ENCODE measurements at regions of chr22 and their contacts with region 1.

Region 1: DNA sequence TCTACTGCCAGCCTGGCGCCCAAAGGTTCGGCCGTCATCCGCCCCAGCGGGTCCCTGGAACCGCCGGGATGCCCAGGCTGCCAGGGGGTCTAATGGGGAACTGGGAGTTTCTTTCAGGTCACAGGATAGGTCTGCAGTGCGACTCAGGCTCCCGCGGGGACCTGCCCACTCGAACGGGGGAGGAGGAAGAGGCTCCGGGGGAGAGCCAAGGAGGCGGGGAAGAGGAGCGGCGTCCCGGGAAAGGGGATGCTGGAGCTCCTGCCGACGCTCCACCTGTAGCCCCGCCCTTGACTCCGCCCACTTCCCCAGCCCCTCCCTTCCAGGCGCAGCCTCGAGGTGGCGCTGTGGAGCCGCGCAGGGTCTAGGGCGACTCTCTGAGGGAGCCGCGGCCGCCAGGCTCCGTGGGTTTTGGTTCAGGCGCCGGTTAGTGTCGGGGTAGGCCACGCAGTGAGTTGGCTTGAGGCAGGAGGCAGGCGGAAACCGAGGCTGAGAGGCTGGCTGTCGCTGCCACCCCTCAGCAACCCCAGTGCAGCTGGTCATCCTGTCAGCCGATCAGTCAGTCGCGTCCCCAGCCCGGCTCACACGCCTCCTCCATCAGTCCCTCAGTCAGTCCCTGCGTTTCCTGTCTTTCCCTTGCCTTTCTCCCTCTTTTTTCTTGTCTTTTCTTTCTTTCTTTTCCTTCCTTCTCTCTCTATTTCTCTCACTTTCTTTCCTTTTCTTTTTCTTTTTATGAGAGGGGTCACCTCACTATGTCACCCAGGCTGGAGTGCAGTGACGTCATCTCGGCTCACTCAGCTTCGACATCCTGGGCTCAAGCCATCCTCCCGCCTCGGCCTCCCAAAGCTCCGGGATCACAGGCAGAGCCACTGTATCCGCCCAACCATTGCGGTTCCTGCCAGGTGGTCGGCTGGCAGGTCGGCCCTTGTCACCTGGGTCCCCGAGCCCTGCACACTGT is 26.4 kb downstream of the YWHAH start:
- DNase-seq: peak; percentile 61 to 100
- H3K4me3 ChIP-seq: peak overlapping the region; percentile 36 to 88 (median 68)
- H3K27ac ChIP-seq: no peak overlapping the region
- H3K4me1 ChIP-seq: peaks cover 0 to 2% (median 0%) of the 10 kb centered on the region in 4 experiments; a peak in 1 of 7 replicates
- H3K27me3 ChIP-seq: peaks cover 0 to 7% (median 2%) of the 10 kb centered on the region in 4 experiments; a peak in 3 of 7 replicates
- CTCF ChIP-seq: peak; percentile 93 to 95 (median 94)
- EP300 ChIP-seq: 0 out of 3 replicates have a peak, but pooled peaks of 1 of the 2 experiments have one; percentile 31
- POLR2A ChIP-seq: no peak
- RAD21 ChIP-seq: peak; percentile 73 to 84

Region 2: GRCh38 chr22:31749636-31750364 is 221.0 kb before region 1 on chr22 and contains the start of gene PRR14L:
- CTCF ChIA-PET with region 1: interaction called, 13 read pairs
- POLR2A ChIA-PET with region 1: interaction called, 4 read pairs
- DNase-seq: peak; percentile 87 to 100
- H3K4me3 ChIP-seq: peak within 1 kb of the TSS; percentile 85 to 98 (median 92)
- H3K27ac ChIP-seq: peak within 1 kb of the TSS; percentile 81
- H3K4me1 ChIP-seq: peaks cover 5 to 16% (median 12%) of the 10 kb centered on the region in 4 experiments
- H3K27me3 ChIP-seq: no peaks in the 10 kb centered on the region
- CTCF ChIP-seq: no peak
- EP300 ChIP-seq: peak in 1 of 2 experiments; percentile 99; a peak in 2 of 3 replicates
- POLR2A ChIP-seq: peak; percentile 85 to 92
- RAD21 ChIP-seq: no peak
- total RNA-seq, gene PRR14L: 98.6 and 110 TPM in 2 replicates

Region 3: DNA sequence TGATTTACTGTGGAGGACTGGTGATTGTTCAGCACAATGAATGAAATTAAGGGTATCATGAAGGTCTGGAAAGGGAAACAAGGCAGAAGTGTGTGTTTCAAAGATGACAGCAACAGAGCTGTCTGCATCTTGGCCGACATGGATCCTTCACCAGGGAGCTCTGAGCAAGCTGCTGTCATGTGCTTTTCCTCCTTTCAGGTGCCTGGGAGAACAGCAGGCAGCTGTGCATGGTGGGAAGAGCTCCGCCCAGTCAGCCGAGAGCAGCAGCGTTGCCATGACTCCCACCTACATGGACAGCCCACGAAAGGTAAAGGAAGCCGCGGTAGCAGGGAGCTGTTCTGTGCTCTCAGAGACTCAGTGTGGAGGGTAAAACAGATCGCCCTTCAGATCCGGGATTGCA is 113.5 kb before region 1 on chr22:
- CTCF ChIA-PET with region 1: interaction called, 11 read pairs
- POLR2A ChIA-PET with region 1: no interaction called
- DNase-seq: peak; percentile 57 to 76
- H3K4me3 ChIP-seq: no peak overlapping the region
- H3K27ac ChIP-seq: no peak overlapping the region
- H3K4me1 ChIP-seq: peaks cover 0 to 2% (median under 1%) of the 10 kb centered on the region in 4 experiments; a peak in 2 of 7 replicates
- H3K27me3 ChIP-seq: no peaks in the 10 kb centered on the region; a peak in 1 of 7 replicates
- CTCF ChIP-seq: no peak
- EP300 ChIP-seq: no peak
- POLR2A ChIP-seq: peak; percentile 24 to 30; a peak in 2 of 3 replicates
- RAD21 ChIP-seq: no peak

Region 4: GRCh38 chr22:31897842-31898805 is 72.6 kb before region 1 on chr22:
- CTCF ChIA-PET with region 1: interaction called, 30 read pairs
- POLR2A ChIA-PET with region 1: no interaction called
- DNase-seq: no peak
- H3K4me3 ChIP-seq: no peak overlapping the region
- H3K27ac ChIP-seq: no peak overlapping the region
- H3K4me1 ChIP-seq: peaks cover 0 to 3% (median 1%) of the 10 kb centered on the region in 4 experiments; a peak in 2 of 7 replicates
- H3K27me3 ChIP-seq: no peaks in the 10 kb centered on the region
- CTCF ChIP-seq: no peak
- EP300 ChIP-seq: no peak
- POLR2A ChIP-seq: no peak
- RAD21 ChIP-seq: no peak

Region 5: GRCh38 chr22:31943976-31944699 is 26.6 kb before region 1 on chr22 and contains the start of gene YWHAH:
- CTCF ChIA-PET with region 1: interaction called, 12 read pairs
- POLR2A ChIA-PET with region 1: interaction called, 4 read pairs
- DNase-seq: peak; percentile 84 to 95
- H3K4me3 ChIP-seq: peak within 1 kb of the TSS; percentile 80 to 92 (median 85)
- H3K27ac ChIP-seq: peak within 1 kb of the TSS; percentile 91
- H3K4me1 ChIP-seq: peaks cover 2 to 14% (median 11%) of the 10 kb centered on the region in 4 experiments; a peak in 6 of 7 replicates
- H3K27me3 ChIP-seq: no peaks in the 10 kb centered on the region
- CTCF ChIP-seq: no peak
- EP300 ChIP-seq: no peak
- POLR2A ChIP-seq: peak; percentile 59 to 97
- RAD21 ChIP-seq: peak in 1 of 2 experiments; percentile 7; a peak in 1 of 4 replicates
- total RNA-seq, gene YWHAH: 247 and 248 TPM in 2 replicates

Region 6: DNA sequence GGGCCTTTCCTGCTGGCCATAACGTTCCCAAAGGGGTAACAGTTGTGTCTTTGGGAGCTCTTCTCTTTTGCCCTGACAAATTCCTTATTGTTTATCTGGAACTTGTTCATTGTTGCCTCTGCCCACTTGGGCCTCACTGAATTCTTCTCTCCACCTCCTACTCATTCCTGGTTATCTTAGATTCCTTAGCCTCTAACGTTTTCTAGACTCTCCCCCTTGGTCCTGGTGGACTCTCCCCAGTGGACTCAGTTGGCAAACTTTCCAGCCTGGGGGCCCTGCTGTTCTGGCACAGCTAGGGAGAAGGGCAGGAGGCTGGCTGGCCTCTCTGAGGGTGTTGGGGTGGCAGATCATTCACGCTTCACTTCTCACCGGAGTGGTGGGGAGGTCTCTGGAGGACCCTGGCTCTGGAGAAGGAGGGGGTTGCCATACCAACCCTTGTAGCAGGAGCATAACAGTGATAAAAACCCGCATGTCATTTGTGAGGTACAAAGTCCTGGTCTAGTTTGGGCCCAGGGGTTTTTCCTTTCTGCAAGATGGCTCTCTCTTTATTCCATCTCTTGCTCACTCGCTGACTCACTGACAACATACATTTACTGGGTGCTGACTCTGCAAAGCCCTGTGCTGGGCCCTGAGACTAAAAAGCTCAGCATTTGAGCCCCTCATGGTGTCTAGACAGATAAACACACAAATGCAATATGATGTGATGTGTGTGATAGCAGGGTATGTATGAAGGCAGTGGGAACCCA is 13.3 kb after region 1 on chr22:
- CTCF ChIA-PET with region 1: interaction called, 12 read pairs
- POLR2A ChIA-PET with region 1: no interaction called
- DNase-seq: no peak
- H3K4me3 ChIP-seq: no peak overlapping the region
- H3K27ac ChIP-seq: no peak overlapping the region
- H3K4me1 ChIP-seq: no peaks in the 10 kb centered on the region
- H3K27me3 ChIP-seq: no peaks in the 10 kb centered on the region; a peak in 2 of 7 replicates
- CTCF ChIP-seq: no peak
- EP300 ChIP-seq: no peak
- POLR2A ChIP-seq: no peak
- RAD21 ChIP-seq: no peak